Activated T-helper 2 cell treated with anti-CD3 and anti-CD28 coated beads, Interferon-gamma antibody, Interleukin-2, Interleukin-4, amounts not matched to agents 10 μg/mL and 5 μg/mL and 100 μg/mL, durations not matched to agents 14 hours and 24 hours and 36 hours (primary cell): ENCODE measurements at regions of chr7 and their contacts with region 1.

Region 1: DNA sequence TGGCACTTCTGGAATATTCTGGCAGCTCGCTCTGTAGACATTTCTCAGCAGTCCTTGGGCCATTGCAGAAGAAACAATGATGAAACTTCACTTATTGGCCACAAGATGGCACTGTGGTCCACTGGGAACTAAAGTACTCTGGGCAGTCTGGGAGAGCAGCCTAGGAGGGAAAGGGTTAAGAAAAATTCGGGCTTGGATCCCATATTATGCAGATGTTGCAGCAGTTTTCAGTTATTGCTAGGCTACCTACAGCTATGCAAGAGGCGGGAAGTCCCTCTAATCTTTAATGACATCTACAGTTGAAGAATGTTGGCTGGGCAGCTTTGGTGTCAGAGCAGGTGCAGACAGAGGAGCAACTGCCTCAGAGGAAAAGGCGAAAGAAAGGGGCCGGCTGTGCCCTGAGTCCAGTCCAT is 201.7 kb upstream of the PRSS58 start:
- DNase-seq: no peak
- H3K4me3 Mint-ChIP-seq: no peak overlapping the region
- H3K27ac Mint-ChIP-seq: no peak overlapping the region
- H3K4me1 Mint-ChIP-seq: peaks cover 43% of the 10 kb centered on the region
- H3K27me3 Mint-ChIP-seq: peaks cover 7% of the 10 kb centered on the region

Region 2: GRCh38 chr7:142134909-142135308 is 324.6 kb before region 1 on chr7:
- intact Hi-C with region 1: no loop called
- DNase-seq: no peak
- H3K4me3 Mint-ChIP-seq: no peak overlapping the region
- H3K27ac Mint-ChIP-seq: no peak overlapping the region
- H3K4me1 Mint-ChIP-seq: no peaks in the 10 kb centered on the region
- H3K27me3 Mint-ChIP-seq: no peaks in the 10 kb centered on the region

Region 3: DNA sequence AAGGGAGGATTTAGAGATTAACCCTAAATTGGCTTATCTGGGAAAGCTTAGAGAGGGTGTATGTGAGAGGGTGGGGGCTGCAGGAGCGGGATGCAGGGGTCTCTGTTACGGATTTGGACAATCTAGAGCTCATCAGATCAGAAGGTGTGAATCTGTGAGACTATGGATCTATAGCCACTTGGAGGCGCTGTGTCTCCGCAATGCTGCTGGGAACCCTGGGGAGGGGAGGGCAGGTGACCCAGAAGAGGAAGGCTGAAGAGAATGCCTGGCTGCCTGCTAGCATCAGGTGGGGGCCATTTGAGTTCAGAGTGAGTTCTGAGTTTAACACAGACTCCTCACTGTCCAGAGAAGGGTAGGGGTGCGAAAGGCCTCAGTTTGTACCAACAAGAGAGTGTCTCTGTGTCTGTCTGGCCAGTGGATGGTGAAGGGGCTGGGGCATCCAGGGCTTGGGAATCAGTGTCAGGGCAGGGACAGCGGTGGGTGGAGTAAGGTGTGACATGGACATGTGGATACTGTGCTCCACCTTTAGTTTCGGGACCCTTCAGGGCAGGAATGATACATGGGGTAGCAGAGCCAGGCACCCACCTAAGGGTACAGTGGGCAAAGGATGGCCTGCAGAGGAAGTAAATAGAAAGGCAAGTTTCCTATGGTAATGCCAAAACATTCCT is 14.4 kb before region 1 on chr7:
- intact Hi-C with region 1: loop called (anchors 2 kb)
- DNase-seq: no peak
- H3K4me3 Mint-ChIP-seq: no peak overlapping the region
- H3K27ac Mint-ChIP-seq: no peak overlapping the region
- H3K4me1 Mint-ChIP-seq: peaks cover 32% of the 10 kb centered on the region
- H3K27me3 Mint-ChIP-seq: peaks cover 6% of the 10 kb centered on the region

Region 4: DNA sequence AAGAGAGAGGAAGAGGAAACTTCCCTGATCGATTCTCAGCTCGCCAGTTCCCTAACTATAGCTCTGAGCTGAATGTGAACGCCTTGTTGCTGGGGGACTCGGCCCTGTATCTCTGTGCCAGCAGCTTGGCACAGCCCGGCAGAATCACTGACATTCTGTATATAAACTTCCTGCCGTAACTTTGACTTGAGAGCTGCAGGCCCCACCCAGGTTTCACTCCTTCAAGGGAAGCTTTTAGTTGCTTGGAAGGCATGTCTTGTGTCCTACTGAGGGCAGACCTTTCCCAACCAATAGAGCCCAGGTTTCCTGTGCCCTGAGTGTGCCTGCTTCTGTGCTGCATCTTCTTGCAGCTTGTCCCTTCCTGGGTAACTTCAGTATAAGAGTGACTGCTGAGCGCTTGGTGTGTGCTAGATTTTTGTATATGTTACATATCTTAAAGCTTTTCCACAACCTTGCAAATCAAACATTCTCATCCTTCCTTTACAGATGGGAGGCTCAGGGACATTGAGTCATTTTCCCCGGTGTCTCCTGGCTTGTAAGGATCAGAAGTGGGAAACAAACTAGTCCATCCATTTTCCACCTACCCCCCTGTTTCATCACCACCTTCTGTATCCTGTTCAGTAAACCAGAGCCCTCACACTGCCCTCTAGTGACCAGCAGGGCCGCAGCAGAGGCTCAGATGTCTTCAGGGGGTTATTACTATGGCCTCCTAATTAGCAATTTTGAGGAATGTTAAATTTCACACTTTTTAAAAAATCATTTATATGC is 23.5 kb after region 1 on chr7:
- intact Hi-C with region 1: loop called (anchors 1 kb)
- DNase-seq: no peak
- H3K4me3 Mint-ChIP-seq: peak overlapping the region; percentile 26
- H3K27ac Mint-ChIP-seq: peak overlapping the region; percentile 78
- H3K4me1 Mint-ChIP-seq: peaks cover 24% of the 10 kb centered on the region
- H3K27me3 Mint-ChIP-seq: no peaks in the 10 kb centered on the region

Region 5: DNA sequence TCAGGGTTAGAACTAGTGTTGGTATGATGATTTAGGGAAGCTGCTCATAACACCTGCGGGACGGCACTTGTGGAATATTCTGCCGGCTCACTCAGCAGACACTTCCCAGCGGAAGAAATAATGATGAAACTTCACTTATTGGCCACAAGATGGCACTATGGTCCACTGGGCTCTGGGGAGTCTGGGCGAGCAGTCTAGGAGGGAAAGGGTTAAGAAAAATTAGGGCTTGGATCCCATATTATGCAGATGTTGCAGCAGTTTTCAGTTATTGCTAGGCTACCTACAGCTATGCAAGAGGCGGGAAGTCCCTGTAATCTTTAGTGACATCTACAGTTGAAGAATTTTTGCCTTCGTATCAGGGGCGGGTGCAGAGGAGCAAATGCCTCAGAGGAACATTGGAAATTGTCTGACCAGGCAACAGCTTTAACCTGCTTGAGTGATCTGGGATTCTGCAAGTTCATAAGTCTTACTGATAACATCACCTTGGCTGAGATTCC is 37.0 kb after region 1 on chr7:
- intact Hi-C with region 1: loop called (anchors 5 kb)
- DNase-seq: no peak
- H3K4me3 Mint-ChIP-seq: peak overlapping the region; percentile 17
- H3K27ac Mint-ChIP-seq: no peak overlapping the region
- H3K4me1 Mint-ChIP-seq: peaks cover 25% of the 10 kb centered on the region
- H3K27me3 Mint-ChIP-seq: peaks cover 3% of the 10 kb centered on the region